ENCODE measurements at regions of chr5 and their contacts with region 1.

Region 1: DNA sequence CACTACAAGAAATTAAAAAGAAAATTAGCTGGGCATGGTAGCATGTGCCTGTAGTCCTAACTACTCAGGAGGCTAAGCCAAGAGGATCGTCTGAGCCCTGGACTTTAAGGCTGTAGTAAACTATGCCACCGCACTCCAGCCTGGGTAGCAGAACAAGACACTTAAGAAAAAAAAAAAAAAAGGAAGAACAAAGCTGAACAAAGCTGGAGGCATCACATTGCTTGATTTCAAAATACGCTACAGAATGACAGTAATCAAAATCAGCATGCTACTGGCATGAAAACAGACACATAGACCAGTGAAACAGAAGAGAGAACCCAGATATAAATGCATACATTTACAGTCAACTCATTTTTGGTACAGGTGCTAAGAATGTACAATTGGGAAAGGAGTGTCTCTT is 14.5 kb upstream of the OTULIN start:
- DNase-seq: no peak
- H3K4me3 ChIP-seq: no peak overlapping the region
- H3K4me3 Mint-ChIP-seq: no peak overlapping the region
- H3K27ac ChIP-seq: no peak overlapping the region
- H3K27ac Mint-ChIP-seq: peak overlapping the region in 1 of 7 donors; percentile 60
- H3K4me1 ChIP-seq: peaks cover under 1% of the 10 kb centered on the region
- H3K4me1 Mint-ChIP-seq: peaks cover 0 to 2% (median 1%) of the 10 kb centered on the region in 4 donors
- H3K27me3 ChIP-seq: peaks cover 3% of the 10 kb centered on the region
- H3K27me3 Mint-ChIP-seq: peaks cover 15 to 17% of the 10 kb centered on the region in 2 donors

Region 2: GRCh38 chr5:14351845-14352712 is 298.0 kb before region 1 on chr5:
- CTCF ChIA-PET with region 1: interaction called, 81 read pairs
- POLR2A ChIA-PET with region 1: no interaction called
- intact Hi-C with region 1: loop called (anchors 1 kb)
- DNase-seq: peak; percentile 46 to 58 (median 57)
- H3K4me3 ChIP-seq: no peak overlapping the region
- H3K4me3 Mint-ChIP-seq: no peak overlapping the region
- H3K27ac ChIP-seq: no peak overlapping the region
- H3K27ac Mint-ChIP-seq: no peak overlapping the region
- H3K4me1 ChIP-seq: no peaks in the 10 kb centered on the region
- H3K4me1 Mint-ChIP-seq: no peaks in the 10 kb centered on the region
- H3K27me3 ChIP-seq: no peaks in the 10 kb centered on the region
- H3K27me3 Mint-ChIP-seq: peaks cover 2% of the 10 kb centered on the region in 2 donors

Region 3: GRCh38 chr5:14357851-14358250 is 292.2 kb before region 1 on chr5:
- CTCF ChIA-PET with region 1: interaction called, 153 read pairs
- POLR2A ChIA-PET with region 1: interaction called, 3 read pairs
- intact Hi-C with region 1: no loop called
- DNase-seq: no peak
- H3K4me3 ChIP-seq: no peak overlapping the region
- H3K4me3 Mint-ChIP-seq: no peak overlapping the region
- H3K27ac ChIP-seq: no peak overlapping the region
- H3K27ac Mint-ChIP-seq: no peak overlapping the region
- H3K4me1 ChIP-seq: no peaks in the 10 kb centered on the region
- H3K4me1 Mint-ChIP-seq: no peaks in the 10 kb centered on the region
- H3K27me3 ChIP-seq: no peaks in the 10 kb centered on the region
- H3K27me3 Mint-ChIP-seq: peaks cover 2 to 3% of the 10 kb centered on the region in 2 donors

Region 4: GRCh38 chr5:14364576-14365472 is 285.2 kb before region 1 on chr5:
- CTCF ChIA-PET with region 1: interaction called, 153 read pairs
- POLR2A ChIA-PET with region 1: interaction called, 3 read pairs
- intact Hi-C with region 1: loop called (anchors 1 kb)
- DNase-seq: no peak
- H3K4me3 ChIP-seq: no peak overlapping the region
- H3K4me3 Mint-ChIP-seq: peak overlapping the region in 1 of 8 donors; percentile 5
- H3K27ac ChIP-seq: no peak overlapping the region
- H3K27ac Mint-ChIP-seq: peak overlapping the region in 4 of 7 donors; percentile 0 to 66 (median 48)
- H3K4me1 ChIP-seq: peaks cover 28% of the 10 kb centered on the region
- H3K4me1 Mint-ChIP-seq: peaks cover 13 to 33% (median 25%) of the 10 kb centered on the region in 4 donors
- H3K27me3 ChIP-seq: no peaks in the 10 kb centered on the region
- H3K27me3 Mint-ChIP-seq: peaks cover 2% of the 10 kb centered on the region in 2 donors

Region 5: DNA sequence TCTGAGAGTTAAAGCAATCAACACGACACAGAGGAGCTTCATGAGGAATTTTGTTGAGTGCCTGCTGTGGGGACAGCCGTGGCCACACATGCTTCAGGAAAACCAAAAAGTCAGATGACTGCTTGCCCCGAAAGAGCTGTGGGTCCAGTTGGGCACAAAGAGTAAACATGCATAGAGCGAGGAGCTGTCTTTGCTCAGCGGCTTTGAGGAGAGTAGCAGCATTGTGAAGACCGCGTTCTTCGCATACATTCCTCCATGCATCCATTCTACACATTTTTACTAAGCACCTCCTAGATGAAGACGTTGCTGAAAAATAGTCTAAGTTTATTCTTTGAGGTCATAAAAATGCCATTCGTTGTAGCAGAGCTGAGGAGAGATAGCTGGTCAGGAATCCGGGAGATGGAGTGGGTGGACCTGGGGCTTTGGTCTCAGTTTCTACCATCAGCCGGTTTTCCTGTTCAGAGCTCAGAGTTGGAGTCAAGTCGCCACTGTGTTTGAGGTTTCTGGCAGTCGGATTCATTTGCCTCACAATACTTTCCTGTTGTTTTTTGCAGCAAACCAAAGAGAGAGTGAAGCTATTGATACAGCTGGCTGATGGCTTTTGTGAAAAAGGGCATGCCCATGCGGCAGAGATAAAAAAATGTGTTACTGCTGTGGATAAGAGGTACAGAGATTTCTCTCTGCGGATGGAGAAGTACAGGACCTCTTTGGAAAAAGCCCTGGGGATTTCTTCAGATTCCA is 263.0 kb before region 1 on chr5:
- CTCF ChIA-PET with region 1: interaction called, 28 read pairs
- POLR2A ChIA-PET with region 1: no interaction called
- intact Hi-C with region 1: no loop called
- DNase-seq: no peak
- H3K4me3 ChIP-seq: no peak overlapping the region
- H3K4me3 Mint-ChIP-seq: no peak overlapping the region
- H3K27ac ChIP-seq: no peak overlapping the region
- H3K27ac Mint-ChIP-seq: no peak overlapping the region
- H3K4me1 ChIP-seq: no peaks in the 10 kb centered on the region
- H3K4me1 Mint-ChIP-seq: no peaks in the 10 kb centered on the region
- H3K27me3 ChIP-seq: no peaks in the 10 kb centered on the region
- H3K27me3 Mint-ChIP-seq: peaks cover 0 to 9% of the 10 kb centered on the region in 2 donors

Region 6: GRCh38 chr5:14399054-14399692 is 250.9 kb before region 1 on chr5:
- CTCF ChIA-PET with region 1: interaction called, 175 read pairs
- POLR2A ChIA-PET with region 1: interaction called, 4 read pairs
- intact Hi-C with region 1: loop called (anchors 1 kb)
- DNase-seq: peak in 4 of 5 donors; percentile 27 to 51 (median 44)
- H3K4me3 ChIP-seq: no peak overlapping the region
- H3K4me3 Mint-ChIP-seq: no peak overlapping the region
- H3K27ac ChIP-seq: no peak overlapping the region
- H3K27ac Mint-ChIP-seq: no peak overlapping the region
- H3K4me1 ChIP-seq: no peaks in the 10 kb centered on the region
- H3K4me1 Mint-ChIP-seq: peaks cover 3 to 12% (median 7%) of the 10 kb centered on the region in 4 donors
- H3K27me3 ChIP-seq: no peaks in the 10 kb centered on the region
- H3K27me3 Mint-ChIP-seq: peaks cover 1 to 4% of the 10 kb centered on the region in 2 donors

Region 7: GRCh38 chr5:14595189-14595588 is 54.9 kb before region 1 on chr5:
- CTCF ChIA-PET with region 1: interaction called, 28 read pairs
- POLR2A ChIA-PET with region 1: interaction called, 3 read pairs
- intact Hi-C with region 1: no loop called
- DNase-seq: peak; percentile 40 to 56 (median 49)
- H3K4me3 ChIP-seq: peak overlapping the region; percentile 16 to 34
- H3K4me3 Mint-ChIP-seq: peak overlapping the region; percentile 78 to 88 (median 84)
- H3K27ac ChIP-seq: peak overlapping the region; percentile 55
- H3K27ac Mint-ChIP-seq: peak overlapping the region; percentile 84 to 98 (median 96)
- H3K4me1 ChIP-seq: peaks cover 86% of the 10 kb centered on the region
- H3K4me1 Mint-ChIP-seq: peaks cover 68 to 90% (median 79%) of the 10 kb centered on the region in 4 donors
- H3K27me3 ChIP-seq: no peaks in the 10 kb centered on the region
- H3K27me3 Mint-ChIP-seq: no peaks in the 10 kb centered on the region

Region 8: GRCh38 chr5:14700478-14701436 is 50.7 kb after region 1 on chr5:
- CTCF ChIA-PET with region 1: no interaction called
- POLR2A ChIA-PET with region 1: no interaction called
- intact Hi-C with region 1: no loop called
- DNase-seq: no peak
- H3K4me3 ChIP-seq: no peak overlapping the region
- H3K4me3 Mint-ChIP-seq: peak overlapping the region in 4 of 8 donors; percentile 12 to 54 (median 35)
- H3K27ac ChIP-seq: peak overlapping the region; percentile 7
- H3K27ac Mint-ChIP-seq: peak overlapping the region; percentile 79 to 99 (median 94)
- H3K4me1 ChIP-seq: peaks cover 59% of the 10 kb centered on the region
- H3K4me1 Mint-ChIP-seq: peaks cover 53 to 91% (median 63%) of the 10 kb centered on the region in 4 donors
- H3K27me3 ChIP-seq: no peaks in the 10 kb centered on the region
- H3K27me3 Mint-ChIP-seq: no peaks in the 10 kb centered on the region